ENCODE measurements at regions of chr20 and their contacts with region 1.

Region 1: GRCh38 chr20:45890985-45891983 is at the starts of genes CTSA and NEURL2:
- DNase-seq: peak; percentile 98
- H3K4me3 ChIP-seq: peak within 1 kb of the TSS; percentile 57 to 95 (median 81)
- H3K27ac ChIP-seq: peak within 1 kb of the TSS; percentile 89 to 93 (median 91)
- H3K4me1 ChIP-seq: peaks cover 0 to 40% (median 29%) of the 10 kb centered on the region in 4 donors
- H3K27me3 ChIP-seq: no peaks in the 10 kb centered on the region
- CTCF ChIP-seq: no peak
- EP300 ChIP-seq: peak in 1 of 4 donors; percentile 23
- POLR2A ChIP-seq: peak; percentile 32 to 42
- total RNA-seq, gene CTSA: 45.7 to 79.5 (median 56.7) TPM
- total RNA-seq, gene NEURL2: 18.9 to 25.8 (median 20.3) TPM

Region 2: GRCh38 chr20:44460795-44461141 is 1430.5 kb before region 1 on chr20:
- intact Hi-C with region 1: no loop called
- DNase-seq: no peak
- H3K4me3 ChIP-seq: no peak overlapping the region
- H3K27ac ChIP-seq: no peak overlapping the region
- H3K4me1 ChIP-seq: no peaks in the 10 kb centered on the region
- H3K27me3 ChIP-seq: no peaks in the 10 kb centered on the region
- CTCF ChIP-seq: no peak
- EP300 ChIP-seq: no peak
- POLR2A ChIP-seq: no peak

Region 3: DNA sequence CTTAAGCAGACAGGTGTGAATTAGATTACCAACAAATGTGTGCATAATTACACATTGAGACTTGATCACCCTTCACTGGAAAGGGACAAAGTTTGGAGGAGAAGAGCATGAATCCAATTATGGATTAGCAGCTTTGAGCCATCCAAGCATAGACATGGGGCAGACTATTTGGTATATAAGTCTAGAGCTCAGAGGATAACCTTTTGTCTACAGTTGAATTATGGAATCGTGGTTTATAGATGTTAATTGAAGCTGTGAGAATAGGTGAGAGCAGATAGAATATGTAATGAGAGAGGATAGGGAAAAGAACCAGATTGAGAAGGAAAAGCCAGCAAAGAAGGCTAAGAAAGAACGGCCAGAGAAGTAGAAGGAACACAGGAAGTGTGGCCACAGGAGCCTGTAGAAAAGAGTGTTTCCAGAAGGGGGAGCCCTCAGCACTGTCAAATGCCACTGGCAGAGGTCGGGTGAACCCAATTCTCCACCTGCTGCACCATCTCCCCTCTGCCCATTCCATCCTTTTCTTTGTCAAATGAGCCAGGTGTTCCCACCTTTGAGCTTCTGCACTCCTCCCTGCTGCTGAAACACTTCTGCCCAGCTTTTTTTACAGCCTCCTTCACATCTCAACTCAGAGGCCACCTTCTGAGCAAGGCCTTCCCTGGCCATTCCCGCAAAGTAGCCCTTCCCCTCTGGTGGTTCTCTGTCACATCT is 92.2 kb before region 1 on chr20:
- intact Hi-C with region 1: loop called (anchors 2 kb)
- DNase-seq: no peak
- H3K4me3 ChIP-seq: no peak overlapping the region
- H3K27ac ChIP-seq: peak overlapping the region; percentile 14 to 55 (median 26)
- H3K4me1 ChIP-seq: peaks cover 0 to 7% (median 4%) of the 10 kb centered on the region in 4 donors
- H3K27me3 ChIP-seq: no peaks in the 10 kb centered on the region
- CTCF ChIP-seq: peak; percentile 25 to 72 (median 66)
- EP300 ChIP-seq: no peak
- POLR2A ChIP-seq: no peak

Region 4: DNA sequence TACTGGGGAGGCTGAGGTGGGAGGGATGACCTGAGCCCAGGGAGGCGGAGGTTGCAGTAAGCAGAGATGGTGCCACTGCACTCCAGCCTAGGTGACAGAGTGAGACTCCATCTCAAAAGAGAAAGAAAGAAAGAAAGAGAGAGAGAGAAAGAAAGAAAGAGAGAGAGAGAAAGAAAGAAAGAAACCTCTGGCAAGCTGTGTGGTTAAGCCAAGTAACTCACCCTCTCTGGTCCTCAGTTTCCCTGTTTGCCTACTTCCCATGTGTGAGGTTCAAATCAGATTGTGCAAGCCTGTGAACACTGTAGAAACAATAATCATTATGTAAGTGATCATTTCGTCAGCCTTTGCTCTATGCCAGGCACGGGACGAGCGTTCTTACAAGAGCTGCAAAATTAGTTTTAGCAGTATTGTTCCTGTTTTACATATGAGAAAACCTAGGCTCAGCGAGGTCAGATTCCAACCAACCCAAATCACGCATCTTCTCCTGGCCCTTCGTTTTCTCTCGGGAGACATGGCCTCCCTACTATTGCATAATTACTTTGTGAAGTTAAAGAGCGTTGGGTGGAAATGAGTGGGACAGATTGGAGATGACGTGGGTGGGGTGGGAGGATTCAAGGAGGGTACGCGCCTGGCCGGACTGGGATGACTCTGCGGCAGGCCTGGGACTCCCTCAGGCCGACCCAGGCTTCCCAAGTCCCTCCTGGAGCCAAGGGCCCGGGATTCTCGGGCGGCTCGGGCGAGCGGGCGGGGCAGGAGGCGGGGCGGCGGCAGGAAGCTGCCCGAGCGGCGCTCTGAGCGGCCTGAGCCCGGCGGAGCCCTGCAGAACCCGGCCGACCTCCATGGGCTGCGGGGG is 58.0 kb before region 1 on chr20 and contains the start of gene SNX21:
- intact Hi-C with region 1: loop called (anchors 5 kb)
- DNase-seq: peak; percentile 97
- H3K4me3 ChIP-seq: peak within 1 kb of the TSS; percentile 65 to 78 (median 73)
- H3K27ac ChIP-seq: peak within 1 kb of the TSS; percentile 91 to 97 (median 94)
- H3K4me1 ChIP-seq: peaks cover 0 to 46% (median 39%) of the 10 kb centered on the region in 4 donors
- H3K27me3 ChIP-seq: no peaks in the 10 kb centered on the region
- CTCF ChIP-seq: no peak
- EP300 ChIP-seq: peak in 2 of 4 donors; percentile 15
- POLR2A ChIP-seq: peak in 1 of 2 donors; percentile 14
- total RNA-seq, gene SNX21: 46.7 to 82.5 (median 52.2) TPM

Region 5: DNA sequence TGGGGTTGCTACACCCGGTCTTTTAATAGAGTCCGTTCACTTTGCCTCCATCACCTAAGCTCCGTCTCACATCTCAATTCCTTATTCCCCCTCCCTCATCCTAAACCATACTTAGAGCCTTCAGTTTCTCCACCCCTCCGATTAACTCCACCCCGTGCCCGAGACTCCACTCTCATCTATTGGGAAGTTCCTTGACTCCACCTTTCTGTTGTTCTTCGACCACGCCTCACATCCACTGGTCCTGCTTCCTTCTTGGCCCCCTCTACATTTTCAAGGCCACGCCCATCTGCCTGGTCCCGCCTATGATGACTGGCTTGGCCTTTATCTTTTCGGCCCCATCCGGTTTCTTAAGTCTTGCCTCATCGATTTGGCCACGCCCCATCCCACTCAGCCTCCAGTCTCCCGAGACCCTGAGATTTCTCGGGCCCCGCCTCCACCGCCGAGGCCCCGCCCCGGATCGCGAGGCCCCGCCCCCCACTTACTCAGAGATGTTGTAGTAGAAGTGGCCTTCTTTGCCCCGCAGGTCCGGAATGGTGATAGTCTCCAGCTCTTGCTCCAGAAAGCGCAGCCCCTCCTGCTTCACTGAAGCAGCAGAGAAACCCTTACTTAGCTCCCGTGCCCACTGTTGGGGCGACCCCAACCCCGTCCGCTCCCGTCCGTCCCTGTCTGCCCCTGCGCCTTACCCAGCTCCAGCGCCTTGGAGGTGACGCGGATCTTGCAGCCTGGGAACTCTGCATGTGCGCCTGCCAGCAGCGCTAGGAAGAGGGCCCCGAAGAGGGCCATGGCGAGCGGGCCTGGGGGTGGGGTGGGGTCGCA is 19.6 kb after region 1 on chr20:
- intact Hi-C with region 1: loop called (anchors 1 kb)
- DNase-seq: peak; percentile 100
- H3K4me3 ChIP-seq: peak overlapping the region; percentile 45 to 58 (median 50)
- H3K27ac ChIP-seq: peak overlapping the region; percentile 82 to 92 (median 84)
- H3K4me1 ChIP-seq: peaks cover 0 to 20% (median 19%) of the 10 kb centered on the region in 4 donors
- H3K27me3 ChIP-seq: no peaks in the 10 kb centered on the region
- CTCF ChIP-seq: no peak
- EP300 ChIP-seq: no peak
- POLR2A ChIP-seq: peak; percentile 65 to 67

Region 6: DNA sequence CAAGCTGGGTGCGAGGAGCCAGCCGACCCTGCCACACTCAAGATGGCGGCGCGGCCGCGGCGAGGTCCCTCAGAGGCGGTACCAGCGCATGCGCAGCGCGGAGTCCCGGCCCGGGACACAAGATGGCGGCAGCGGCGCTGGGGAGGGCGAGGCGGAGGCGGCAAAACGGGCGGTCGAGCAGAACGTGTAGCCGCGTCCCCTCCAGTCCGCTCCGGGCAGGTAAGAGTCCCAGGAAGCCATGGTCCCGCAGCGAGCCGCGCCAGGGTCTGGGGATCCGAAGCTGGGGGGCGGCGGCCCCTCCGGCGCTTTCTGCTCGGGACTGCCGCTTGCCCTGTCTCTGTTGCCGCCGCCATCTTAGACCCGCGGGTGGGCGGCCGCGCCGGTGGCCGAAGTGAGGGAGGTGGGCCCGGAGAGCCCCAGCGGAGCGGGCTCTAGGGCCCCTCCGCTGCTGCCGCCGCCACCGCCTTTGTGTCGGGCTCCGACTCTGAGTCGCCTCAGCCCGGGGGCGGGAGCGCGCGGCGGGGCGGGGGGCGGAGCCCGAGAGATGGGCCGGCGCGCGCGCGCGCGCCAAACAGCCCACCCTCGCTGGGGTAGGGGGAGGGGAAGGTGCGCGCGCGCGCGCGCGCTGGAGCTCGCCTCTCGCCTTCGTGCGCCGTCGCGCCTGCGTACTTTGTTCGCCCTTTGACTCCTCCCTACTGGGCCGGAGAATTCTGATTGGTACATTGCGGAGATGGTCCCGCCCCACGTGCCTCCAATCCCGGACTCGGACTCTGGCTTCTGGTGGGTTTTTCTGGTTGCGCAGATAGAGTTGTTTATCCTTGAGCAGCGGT is 43.5 kb after region 1 on chr20 and contains the start of gene PCIF1:
- intact Hi-C with region 1: loop called (anchors 2 kb)
- DNase-seq: peak; percentile 99
- H3K4me3 ChIP-seq: peak within 1 kb of the TSS; percentile 96 to 100 (median 98)
- H3K27ac ChIP-seq: peak within 1 kb of the TSS; percentile 98 to 100 (median 100)
- H3K4me1 ChIP-seq: peaks cover 0 to 35% (median 22%) of the 10 kb centered on the region in 4 donors
- H3K27me3 ChIP-seq: no peaks in the 10 kb centered on the region
- CTCF ChIP-seq: no peak
- EP300 ChIP-seq: no peak
- POLR2A ChIP-seq: peak; percentile 88 to 90
- total RNA-seq, gene PCIF1: 31.4 to 39.3 (median 32.5) TPM

Region 7: GRCh38 chr20:45971675-45972499 is 80.6 kb after region 1 on chr20 and contains the start of gene ZNF335:
- intact Hi-C with region 1: loop called (anchors 1 kb)
- DNase-seq: peak; percentile 98
- H3K4me3 ChIP-seq: peak within 1 kb of the TSS; percentile 65 to 92 (median 77)
- H3K27ac ChIP-seq: peak within 1 kb of the TSS; percentile 92 to 99 (median 98)
- H3K4me1 ChIP-seq: peaks cover 0 to 36% (median 25%) of the 10 kb centered on the region in 4 donors
- H3K27me3 ChIP-seq: no peaks in the 10 kb centered on the region
- CTCF ChIP-seq: peak; percentile 18 to 51 (median 38)
- EP300 ChIP-seq: peak in 1 of 4 donors; percentile 61
- POLR2A ChIP-seq: peak; percentile 49 to 62
- total RNA-seq, gene ZNF335: 12.0 to 24.4 (median 14.9) TPM

Region 8: DNA sequence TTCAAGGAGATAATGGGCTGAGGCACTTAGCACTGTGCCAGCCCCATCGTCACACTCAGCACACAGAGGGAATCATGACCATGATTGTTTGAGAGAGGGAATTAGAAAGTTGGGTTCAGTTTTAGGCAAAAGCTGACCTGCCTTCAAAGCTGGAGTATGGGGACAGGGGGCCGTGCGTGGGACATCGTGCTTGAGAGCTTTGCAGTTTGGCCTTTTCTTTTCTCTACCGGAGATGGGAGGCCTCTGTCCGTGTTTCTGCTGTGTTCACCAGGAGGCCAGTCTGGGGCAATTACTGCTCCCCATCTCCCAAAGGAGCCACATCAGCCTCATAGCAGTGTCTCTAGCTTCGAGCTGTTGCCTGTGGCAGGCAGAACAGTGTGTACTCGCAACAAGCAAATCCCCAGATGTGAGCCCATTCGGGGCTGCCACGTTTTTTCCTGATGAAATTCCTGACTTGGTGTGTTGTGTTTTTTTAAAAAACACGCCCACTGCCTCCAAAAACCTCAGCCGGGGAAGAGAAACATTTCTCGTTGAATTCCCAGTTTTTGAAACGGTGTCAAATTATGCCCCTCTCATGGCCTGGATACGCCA is 1023.6 kb after region 1 on chr20:
- intact Hi-C with region 1: no loop called
- DNase-seq: peak; percentile 69
- H3K4me3 ChIP-seq: no peak overlapping the region
- H3K27ac ChIP-seq: peak overlapping the region in 1 of 4 donors; percentile 18
- H3K4me1 ChIP-seq: no peaks in the 10 kb centered on the region
- H3K27me3 ChIP-seq: no peaks in the 10 kb centered on the region
- CTCF ChIP-seq: no peak
- EP300 ChIP-seq: no peak
- POLR2A ChIP-seq: no peak